GM10248 (cell line): ENCODE measurements at regions of chr11 and their contacts with region 1.

Region 1: GRCh38 chr11:123547180-123547579 is 107.2 kb downstream of the SCN3B start:
- DNase-seq: peak; percentile 69
- CTCF ChIP-seq: no peak

Region 2: DNA sequence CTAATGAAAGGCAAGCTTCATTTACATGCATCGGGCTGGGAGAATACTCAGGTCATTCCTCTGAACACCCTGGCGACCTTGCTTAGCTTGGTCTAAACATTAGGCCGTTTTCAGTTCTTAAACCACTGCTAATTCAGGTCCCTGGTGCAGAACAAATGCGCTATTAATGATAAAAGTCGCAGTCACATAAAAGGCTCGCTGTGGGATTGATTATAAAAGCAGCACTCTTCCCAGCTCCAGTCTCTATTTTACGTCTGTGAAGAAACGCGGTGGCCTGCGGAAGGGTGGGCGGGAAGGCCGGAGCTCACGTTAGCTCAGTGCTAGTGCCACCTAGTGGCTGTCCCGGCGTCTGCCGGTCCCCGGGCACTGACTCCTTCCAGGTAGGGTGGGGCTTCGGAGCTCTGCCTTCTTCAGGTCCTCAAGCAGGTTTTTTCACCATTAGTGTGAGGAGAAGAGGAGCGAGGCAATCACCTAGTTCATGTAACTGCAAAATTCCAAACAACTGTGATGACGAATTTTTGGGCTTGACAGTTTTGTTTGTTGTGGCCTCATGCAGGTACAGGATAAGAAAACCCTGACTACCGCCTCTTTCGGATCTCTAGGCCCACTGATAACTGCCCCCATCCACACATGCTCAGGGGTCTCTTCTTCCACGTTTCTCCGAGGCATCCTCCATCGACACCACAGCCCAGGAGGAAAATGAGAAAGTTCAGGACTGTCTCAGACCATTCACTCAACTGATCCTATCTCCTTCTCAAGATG is 285.7 kb before region 1 on chr11:
- CTCF ChIA-PET with region 1: no interaction called
- POLR2A ChIA-PET with region 1: no interaction called
- DNase-seq: peak; percentile 76
- CTCF ChIP-seq: peak; percentile 89

Region 3: DNA sequence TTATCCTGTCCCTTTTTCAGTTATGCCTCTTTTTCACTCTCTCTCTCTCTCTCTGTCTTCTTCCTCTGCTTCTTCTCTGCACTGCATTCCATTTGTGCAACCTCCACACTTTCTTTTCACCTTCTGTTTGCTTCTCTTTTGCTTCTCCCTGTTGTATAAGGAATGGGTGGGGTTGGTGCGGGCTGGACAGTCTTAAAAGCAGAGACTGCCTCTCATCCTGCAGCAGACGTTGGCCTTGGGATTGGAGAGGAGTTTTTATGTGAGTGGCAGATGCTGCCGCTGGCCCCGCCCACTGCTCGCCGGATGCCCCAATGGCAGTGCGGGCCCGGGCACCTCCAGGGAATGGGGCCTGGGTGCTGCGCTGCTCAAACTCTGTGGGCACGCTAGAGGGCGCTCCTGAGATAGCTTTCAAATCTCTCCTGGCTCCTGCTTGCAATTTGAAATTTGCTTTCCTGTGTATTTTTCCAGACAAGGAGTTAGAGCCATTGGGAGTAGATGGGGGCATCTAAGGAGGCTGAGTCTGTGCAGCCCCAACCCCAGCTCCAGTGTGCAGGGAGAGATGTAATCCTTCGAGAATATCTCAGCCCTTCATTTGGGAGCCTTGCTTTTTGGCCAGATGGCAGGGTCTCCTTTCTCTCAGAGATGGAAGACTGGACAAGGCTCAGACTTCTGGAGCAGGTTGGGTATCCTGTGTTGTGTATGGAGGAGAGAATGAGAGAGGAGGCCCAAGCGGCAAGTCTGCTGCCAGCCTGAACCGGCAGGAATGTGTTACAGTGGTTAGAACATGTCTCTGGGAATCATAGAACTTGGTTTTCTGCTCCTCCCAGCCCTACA is 35.9 kb before region 1 on chr11:
- CTCF ChIA-PET with region 1: interaction called, 14 read pairs
- POLR2A ChIA-PET with region 1: no interaction called
- DNase-seq: peak; percentile 79
- CTCF ChIP-seq: peak; percentile 83

Region 4: DNA sequence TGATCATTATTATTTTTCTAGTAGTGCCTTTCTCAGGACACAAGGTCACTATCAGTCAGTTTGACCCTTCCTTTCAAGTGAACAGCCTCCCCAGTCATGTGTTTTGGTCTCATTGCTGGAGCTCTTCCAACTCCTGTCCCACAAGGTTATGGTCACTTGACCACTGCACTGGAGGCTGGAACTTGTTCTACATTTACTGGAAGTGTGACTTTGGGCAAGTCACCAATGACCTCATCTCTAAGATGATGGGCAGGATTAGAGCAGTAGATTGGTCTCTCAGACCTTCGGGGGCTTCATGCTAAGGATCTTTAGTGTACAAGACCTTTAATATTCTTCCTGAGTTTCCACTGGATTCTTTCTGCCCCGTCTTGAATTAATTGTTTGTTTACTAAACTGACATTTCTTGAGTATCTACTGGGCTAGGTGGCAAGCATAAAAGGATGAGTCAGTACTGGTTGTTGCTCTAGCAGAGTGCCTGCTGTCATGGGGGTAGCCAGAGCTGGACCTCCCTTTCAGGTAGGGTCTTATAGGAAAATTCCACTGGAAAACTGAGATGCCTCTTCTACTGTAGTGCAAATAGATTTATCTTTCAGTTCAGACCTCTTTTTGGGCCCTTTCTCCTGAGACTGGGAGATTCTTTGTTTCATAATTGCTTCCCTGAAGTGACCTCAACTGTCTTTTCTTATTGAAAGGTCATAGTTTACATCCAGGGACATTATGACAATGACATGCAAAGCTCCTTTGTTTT is 10.3 kb before region 1 on chr11:
- CTCF ChIA-PET with region 1: interaction called, 20 read pairs
- POLR2A ChIA-PET with region 1: no interaction called
- DNase-seq: no peak
- CTCF ChIP-seq: no peak

Region 5: GRCh38 chr11:123640677-123641494 is 93.7 kb after region 1 on chr11:
- CTCF ChIA-PET with region 1: no interaction called
- POLR2A ChIA-PET with region 1: no interaction called
- DNase-seq: peak; percentile 71
- CTCF ChIP-seq: peak; percentile 79

Region 6: DNA sequence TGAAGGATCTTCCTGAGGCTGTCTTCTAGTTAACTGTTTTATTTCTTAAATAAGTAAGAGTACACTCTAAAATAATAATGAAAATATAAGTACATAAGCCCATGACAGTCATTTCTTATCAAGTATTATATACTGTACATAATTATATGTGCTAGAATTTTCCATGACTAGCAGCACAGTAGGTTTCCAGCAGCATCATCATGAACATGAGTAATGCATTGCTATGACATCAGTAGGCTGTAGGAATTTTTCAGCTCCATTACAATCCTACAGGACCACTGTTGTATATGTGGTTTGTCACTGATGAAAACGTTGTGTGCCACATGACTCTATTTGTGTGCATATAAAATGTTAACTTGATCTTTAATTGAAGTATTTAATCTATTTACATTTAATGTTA is 172.3 kb after region 1 on chr11:
- CTCF ChIA-PET with region 1: no interaction called
- POLR2A ChIA-PET with region 1: no interaction called
- DNase-seq: no peak
- CTCF ChIP-seq: no peak